ENCODE measurements at regions of chr1 and their contacts with region 1.

Region 1: GRCh38 chr1:153352523-153352922 is 3.9 kb upstream of the PGLYRP4 start:
- DNase-seq: peak; percentile 60 to 72
- H3K4me3 ChIP-seq: no peak overlapping the region
- H3K4me3 Mint-ChIP-seq: no peak overlapping the region
- H3K27ac Mint-ChIP-seq: no peak overlapping the region
- H3K4me1 ChIP-seq: no peaks in the 10 kb centered on the region
- H3K4me1 Mint-ChIP-seq: no peaks in the 10 kb centered on the region
- H3K27me3 ChIP-seq: no peaks in the 10 kb centered on the region
- H3K27me3 Mint-ChIP-seq: peaks cover 15% of the 10 kb centered on the region
- CTCF ChIP-seq: peak; percentile 89 to 93

Region 2: DNA sequence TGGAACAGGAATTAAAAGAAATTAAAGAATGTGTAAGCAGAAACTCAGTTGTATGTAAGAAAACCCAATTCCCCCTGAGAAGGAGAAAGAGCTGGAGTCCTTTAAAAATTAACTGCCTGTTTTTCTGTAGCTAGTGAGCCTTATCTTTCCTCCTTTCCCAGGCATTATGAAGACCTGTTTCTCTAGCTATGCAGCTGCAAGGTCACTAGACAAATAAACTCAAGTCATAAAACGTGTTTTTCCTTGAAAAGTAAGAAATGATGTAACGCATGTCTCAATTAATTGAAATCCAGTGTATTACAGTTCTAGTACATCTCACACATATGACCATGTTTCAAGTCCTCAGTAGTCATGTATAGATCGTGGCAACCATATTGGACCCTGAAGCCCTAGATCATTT is 17.6 kb after region 1 on chr1:
- CTCF ChIA-PET with region 1: no interaction called
- POLR2A ChIA-PET with region 1: no interaction called
- intact Hi-C with region 1: loop called (anchors 1 kb)
- DNase-seq: no peak
- H3K4me3 ChIP-seq: no peak overlapping the region
- H3K4me3 Mint-ChIP-seq: no peak overlapping the region
- H3K27ac Mint-ChIP-seq: no peak overlapping the region
- H3K4me1 ChIP-seq: peaks cover 6% of the 10 kb centered on the region; the same call in 1 of the 2 replicates
- H3K4me1 Mint-ChIP-seq: no peaks in the 10 kb centered on the region
- H3K27me3 ChIP-seq: no peaks in the 10 kb centered on the region
- H3K27me3 Mint-ChIP-seq: no peaks in the 10 kb centered on the region
- CTCF ChIP-seq: no peak

Region 3: DNA sequence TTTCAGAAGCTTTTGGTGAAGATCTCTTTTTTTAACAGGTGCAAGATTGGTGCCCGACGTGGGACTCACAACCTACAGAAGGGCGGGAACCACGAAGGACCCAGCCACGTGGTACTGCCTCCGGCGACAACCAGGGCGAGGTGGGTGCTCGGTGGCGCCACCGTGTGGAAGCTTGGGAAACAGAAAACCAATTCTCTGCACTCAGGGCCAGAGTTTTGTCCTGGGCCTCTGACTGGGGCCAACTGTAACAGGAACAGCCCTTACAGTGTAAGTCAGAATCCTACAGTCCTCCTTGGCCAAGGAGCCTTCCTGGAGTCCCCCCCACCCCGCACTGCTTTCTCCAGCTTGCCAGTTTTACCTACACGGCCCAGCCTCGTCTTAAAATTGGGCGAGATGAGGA is 52.2 kb after region 1 on chr1:
- CTCF ChIA-PET with region 1: interaction called, 6 read pairs
- POLR2A ChIA-PET with region 1: no interaction called
- intact Hi-C with region 1: loop called (anchors 1 kb)
- DNase-seq: peak; percentile 56 to 69
- H3K4me3 ChIP-seq: no peak overlapping the region
- H3K4me3 Mint-ChIP-seq: no peak overlapping the region
- H3K27ac Mint-ChIP-seq: no peak overlapping the region
- H3K4me1 ChIP-seq: no peaks in the 10 kb centered on the region
- H3K4me1 Mint-ChIP-seq: no peaks in the 10 kb centered on the region
- H3K27me3 ChIP-seq: no peaks in the 10 kb centered on the region; the same call in 1 of the 2 replicates
- H3K27me3 Mint-ChIP-seq: peaks cover 34% of the 10 kb centered on the region
- CTCF ChIP-seq: peak; percentile 52 to 70

Region 4: GRCh38 chr1:153494976-153495535 is 142.5 kb after region 1 on chr1:
- CTCF ChIA-PET with region 1: interaction called, 42 read pairs
- POLR2A ChIA-PET with region 1: no interaction called
- intact Hi-C with region 1: loop called (anchors 1 kb)
- DNase-seq: peak; percentile 82 to 90
- H3K4me3 ChIP-seq: no peak overlapping the region
- H3K4me3 Mint-ChIP-seq: no peak overlapping the region
- H3K27ac Mint-ChIP-seq: peak overlapping the region; percentile 17
- H3K4me1 ChIP-seq: no peaks in the 10 kb centered on the region
- H3K4me1 Mint-ChIP-seq: no peaks in the 10 kb centered on the region
- H3K27me3 ChIP-seq: no peaks in the 10 kb centered on the region
- H3K27me3 Mint-ChIP-seq: peaks cover 16% of the 10 kb centered on the region
- CTCF ChIP-seq: peak; percentile 89 to 92

Region 5: DNA sequence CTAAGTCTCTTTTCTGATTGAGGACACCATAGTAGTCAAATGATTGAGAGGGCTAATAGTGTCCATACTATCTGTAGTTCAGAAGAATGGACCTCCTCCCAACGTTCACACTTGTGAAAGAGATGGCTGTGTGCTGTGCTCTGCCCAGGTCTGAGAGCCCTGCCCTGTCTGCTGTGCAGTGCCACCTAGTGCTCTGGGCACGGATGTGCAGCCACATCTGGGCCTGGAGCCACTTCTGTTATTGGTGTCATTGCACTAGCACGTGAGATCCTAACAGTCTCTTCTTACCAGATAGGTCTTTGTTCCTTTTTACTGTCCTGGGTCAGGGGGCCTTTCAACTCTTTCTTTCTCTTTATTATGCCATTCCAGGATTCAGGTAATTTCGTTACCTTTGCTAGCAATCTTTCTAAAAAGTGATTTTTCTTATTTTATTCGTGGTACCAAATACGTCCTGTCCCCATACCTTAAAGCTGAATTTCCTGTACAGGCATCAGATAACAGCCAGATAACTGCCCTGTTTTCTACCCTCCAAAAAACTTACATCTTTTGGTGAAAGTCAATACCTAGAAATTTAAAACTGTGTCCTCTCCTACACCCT is 397.0 kb after region 1 on chr1:
- CTCF ChIA-PET with region 1: no interaction called
- POLR2A ChIA-PET with region 1: no interaction called
- intact Hi-C with region 1: loop called (anchors 5 kb)
- DNase-seq: peak; percentile 79 to 85
- H3K4me3 ChIP-seq: no peak overlapping the region
- H3K4me3 Mint-ChIP-seq: no peak overlapping the region
- H3K27ac Mint-ChIP-seq: no peak overlapping the region
- H3K4me1 ChIP-seq: no peaks in the 10 kb centered on the region
- H3K4me1 Mint-ChIP-seq: peaks cover under 1% of the 10 kb centered on the region
- H3K27me3 ChIP-seq: no peaks in the 10 kb centered on the region
- H3K27me3 Mint-ChIP-seq: no peaks in the 10 kb centered on the region
- CTCF ChIP-seq: peak; percentile 88 to 97

Measured in Caco-2 (cell line).